ENCODE measurements at regions of chr1 and their contacts with region 1.

Region 1: GRCh38 chr1:202565890-202566602 is 144.2 kb downstream of the SYT2 start:
- DNase-seq: no peak
- ATAC-seq: peak; percentile 6

Region 2: DNA sequence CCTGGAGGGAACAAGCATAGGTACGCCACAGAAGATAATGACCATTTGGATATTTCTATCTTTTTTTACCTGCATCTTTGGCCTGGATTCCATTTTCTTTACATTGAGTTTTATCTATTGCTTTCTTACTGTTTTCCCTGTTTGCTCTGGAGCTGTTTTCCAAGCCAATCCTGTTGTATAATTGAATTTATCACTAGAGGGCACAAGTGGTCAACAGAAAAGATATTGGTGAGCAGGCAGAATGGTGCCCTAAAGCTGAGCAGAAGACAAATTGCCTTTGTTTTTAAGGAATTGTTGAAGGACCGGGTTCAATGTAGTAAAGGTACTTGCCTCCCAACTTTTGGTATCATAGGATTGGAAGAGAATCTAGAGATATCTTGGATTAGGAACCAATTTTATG is 64.8 kb before region 1 on chr1:
- intact Hi-C with region 1: loop called (anchors 10 kb)
- DNase-seq: no peak
- ATAC-seq: peak; percentile 22